ENCODE measurements at regions of chr14 and their contacts with region 1.

Region 1: GRCh38 chr14:35438910-35439713 is 34.6 kb upstream of the NFKBIA start:
- DNase-seq: peak; percentile 25
- CTCF ChIP-seq: peak; percentile 14

Region 2: GRCh38 chr14:35687335-35687939 is 248.3 kb after region 1 on chr14:
- in situ Hi-C with region 1: loop called (anchors 10 kb)
- DNase-seq: peak; percentile 25
- CTCF ChIP-seq: peak; percentile 81

Region 3: GRCh38 chr14:35704793-35705493 is 265.8 kb after region 1 on chr14:
- in situ Hi-C with region 1: no loop called
- DNase-seq: no peak
- CTCF ChIP-seq: no peak

Region 4: GRCh38 chr14:35814371-35815005 is 375.4 kb after region 1 on chr14:
- in situ Hi-C with region 1: loop called (anchors 25 kb)
- DNase-seq: peak; percentile 53
- CTCF ChIP-seq: peak; percentile 72

Measured in GM13976 (cell line).